Mammary epithelial cell (primary cell): ENCODE measurements at regions of chrX and their contacts with region 1.

Region 1: DNA sequence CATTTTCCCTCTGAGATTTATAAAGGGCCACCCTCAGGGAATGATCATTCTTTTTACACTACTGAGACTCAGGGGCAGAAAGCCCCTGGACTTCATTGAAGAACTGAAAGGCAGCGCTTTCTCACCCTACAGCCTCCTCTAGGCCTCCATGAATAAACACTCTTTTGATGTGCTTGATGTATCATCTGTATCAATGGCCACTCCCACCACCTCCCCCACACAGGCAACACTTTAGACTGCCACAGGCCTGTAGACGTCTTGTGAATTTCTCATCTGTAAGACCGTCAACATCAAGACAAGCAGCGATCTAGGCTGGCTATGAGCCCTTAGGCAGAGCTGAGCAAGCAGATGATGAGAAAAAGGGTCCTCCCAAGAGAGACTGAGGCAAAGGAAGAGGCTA is 123.2 kb downstream of the HUWE1 start:
- DNase-seq: no peak
- H3K4me3 ChIP-seq: no peak overlapping the region
- H3K27ac ChIP-seq: no peak overlapping the region
- H3K4me1 ChIP-seq: no peaks in the 10 kb centered on the region
- H3K27me3 ChIP-seq: peaks cover 2% of the 10 kb centered on the region
- CTCF ChIP-seq: no peak

Region 2: GRCh38 chrX:53494436-53494835 is 68.9 kb before region 1 on chrX:
- CTCF ChIA-PET with region 1: no interaction called
- dilution Hi-C with region 1: loop called (anchors 5 kb)
- in situ Hi-C with region 1: no loop called
- intact Hi-C with region 1: no loop called
- DNase-seq: no peak
- H3K4me3 ChIP-seq: no peak overlapping the region
- H3K27ac ChIP-seq: no peak overlapping the region
- H3K4me1 ChIP-seq: no peaks in the 10 kb centered on the region
- H3K27me3 ChIP-seq: no peaks in the 10 kb centered on the region
- CTCF ChIP-seq: no peak

Region 3: GRCh38 chrX:53616946-53617345 is 53.6 kb after region 1 on chrX:
- CTCF ChIA-PET with region 1: no interaction called
- dilution Hi-C with region 1: no loop called
- in situ Hi-C with region 1: no loop called
- intact Hi-C with region 1: no loop called
- DNase-seq: no peak
- H3K4me3 ChIP-seq: no peak overlapping the region
- H3K27ac ChIP-seq: no peak overlapping the region
- H3K4me1 ChIP-seq: no peaks in the 10 kb centered on the region
- H3K27me3 ChIP-seq: no peaks in the 10 kb centered on the region
- CTCF ChIP-seq: no peak